ENCODE measurements at regions of chr14 and their contacts with region 1.

Region 1: DNA sequence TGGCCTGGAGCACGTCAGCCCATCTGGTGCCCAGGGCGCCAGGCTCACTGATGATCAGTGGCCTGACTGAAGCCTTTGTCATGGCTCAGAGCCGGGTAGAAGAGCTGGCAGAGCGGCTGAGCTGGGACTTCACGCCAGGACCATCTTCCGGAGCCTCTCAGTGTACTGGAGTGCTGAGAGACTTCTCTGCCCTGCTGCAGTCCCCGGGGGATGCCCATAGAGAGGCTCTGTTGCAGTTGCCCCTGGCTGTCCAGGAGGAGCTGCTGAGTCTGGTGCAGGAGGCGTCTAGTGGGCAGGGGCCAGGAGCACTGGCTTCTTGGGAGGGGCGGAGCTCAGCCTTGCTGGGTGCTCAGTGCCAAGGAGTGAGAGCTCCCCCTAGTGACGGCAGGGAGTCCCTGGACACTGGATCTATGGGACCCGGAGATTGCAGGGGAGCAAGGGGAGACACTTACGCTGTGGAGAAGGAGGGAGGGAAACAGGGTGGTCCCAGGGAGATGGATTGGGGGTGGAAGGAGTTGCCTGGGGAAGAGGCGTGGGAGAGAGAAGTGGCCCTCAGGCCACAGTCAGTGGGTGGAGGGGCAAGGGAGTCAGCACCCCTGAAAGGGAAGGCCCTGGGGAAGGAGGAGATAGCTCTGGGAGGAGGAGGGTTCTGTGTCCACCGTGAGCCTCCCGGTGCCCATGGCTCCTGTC is 2.0 kb downstream of the KHNYN start:
- DNase-seq: peak; percentile 95
- ATAC-seq: peak; percentile 65
- H3K4me3 Mint-ChIP-seq: peak overlapping the region; percentile 90
- H3K27ac Mint-ChIP-seq: peak overlapping the region; percentile 97
- H3K4me1 Mint-ChIP-seq: peaks cover 31% of the 10 kb centered on the region
- H3K27me3 Mint-ChIP-seq: no peaks in the 10 kb centered on the region
- CTCF ChIP-seq: peak; percentile 87

Region 2: DNA sequence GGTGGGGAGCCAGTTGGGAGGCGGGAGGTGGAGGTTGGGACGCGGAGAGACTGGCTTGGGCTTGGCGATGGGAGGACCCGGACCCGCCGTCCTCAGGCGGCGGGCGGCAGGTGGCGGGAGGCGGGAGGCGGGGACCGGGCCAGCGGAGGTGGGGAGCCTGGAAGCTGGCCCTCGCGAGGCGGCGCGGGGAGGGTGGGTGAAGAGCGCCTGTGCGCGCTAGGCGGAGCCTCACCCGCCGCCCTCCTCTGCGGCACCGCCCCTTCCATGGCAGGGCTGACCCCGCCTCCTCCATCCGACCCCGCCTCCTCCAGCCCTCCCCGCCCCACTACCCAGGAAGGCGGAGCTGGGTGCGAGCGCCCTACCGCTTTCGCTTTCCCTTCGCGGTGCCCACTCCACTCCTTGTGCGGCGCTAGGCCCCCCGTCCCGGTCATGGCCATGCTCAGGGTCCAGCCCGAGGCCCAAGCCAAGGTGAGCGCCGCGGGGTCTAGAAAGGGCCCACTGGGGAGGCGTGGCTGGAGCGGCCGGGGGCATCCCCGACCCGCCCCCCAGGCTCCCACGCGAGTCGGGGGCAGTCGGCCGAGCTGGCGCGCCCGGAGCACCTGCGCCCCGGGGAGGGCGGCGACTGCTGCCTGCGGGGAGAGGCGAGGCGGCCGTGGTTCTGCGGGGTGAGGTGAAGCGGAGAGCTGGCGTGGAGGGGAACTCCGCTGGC is 295.7 kb before region 1 on chr14 and contains the start of gene PSME1:
- CTCF ChIA-PET with region 1: no interaction called
- POLR2A ChIA-PET with region 1: no interaction called
- intact Hi-C with region 1: no loop called
- DNase-seq: peak; percentile 96
- ATAC-seq: peak; percentile 97
- H3K4me3 Mint-ChIP-seq: peak within 1 kb of the TSS; percentile 97
- H3K27ac Mint-ChIP-seq: peak within 1 kb of the TSS; percentile 92
- H3K4me1 Mint-ChIP-seq: peaks cover 56% of the 10 kb centered on the region
- H3K27me3 Mint-ChIP-seq: no peaks in the 10 kb centered on the region
- CTCF ChIP-seq: no peak
- total RNA-seq, gene PSME1: 451 to 460 TPM

Region 3: GRCh38 chr14:24310646-24311604 is 120.8 kb before region 1 on chr14 and contains the start of gene LTB4R:
- CTCF ChIA-PET with region 1: interaction called, 43 read pairs
- POLR2A ChIA-PET with region 1: interaction called, 11 read pairs
- intact Hi-C with region 1: no loop called
- DNase-seq: peak; percentile 74
- ATAC-seq: peak; percentile 87
- H3K4me3 Mint-ChIP-seq: peak within 1 kb of the TSS; percentile 58
- H3K27ac Mint-ChIP-seq: peak within 1 kb of the TSS; percentile 81
- H3K4me1 Mint-ChIP-seq: peaks cover 66% of the 10 kb centered on the region
- H3K27me3 Mint-ChIP-seq: no peaks in the 10 kb centered on the region
- CTCF ChIP-seq: peak; percentile 63
- total RNA-seq, gene LTB4R: 11.6 to 11.7 TPM

Region 4: DNA sequence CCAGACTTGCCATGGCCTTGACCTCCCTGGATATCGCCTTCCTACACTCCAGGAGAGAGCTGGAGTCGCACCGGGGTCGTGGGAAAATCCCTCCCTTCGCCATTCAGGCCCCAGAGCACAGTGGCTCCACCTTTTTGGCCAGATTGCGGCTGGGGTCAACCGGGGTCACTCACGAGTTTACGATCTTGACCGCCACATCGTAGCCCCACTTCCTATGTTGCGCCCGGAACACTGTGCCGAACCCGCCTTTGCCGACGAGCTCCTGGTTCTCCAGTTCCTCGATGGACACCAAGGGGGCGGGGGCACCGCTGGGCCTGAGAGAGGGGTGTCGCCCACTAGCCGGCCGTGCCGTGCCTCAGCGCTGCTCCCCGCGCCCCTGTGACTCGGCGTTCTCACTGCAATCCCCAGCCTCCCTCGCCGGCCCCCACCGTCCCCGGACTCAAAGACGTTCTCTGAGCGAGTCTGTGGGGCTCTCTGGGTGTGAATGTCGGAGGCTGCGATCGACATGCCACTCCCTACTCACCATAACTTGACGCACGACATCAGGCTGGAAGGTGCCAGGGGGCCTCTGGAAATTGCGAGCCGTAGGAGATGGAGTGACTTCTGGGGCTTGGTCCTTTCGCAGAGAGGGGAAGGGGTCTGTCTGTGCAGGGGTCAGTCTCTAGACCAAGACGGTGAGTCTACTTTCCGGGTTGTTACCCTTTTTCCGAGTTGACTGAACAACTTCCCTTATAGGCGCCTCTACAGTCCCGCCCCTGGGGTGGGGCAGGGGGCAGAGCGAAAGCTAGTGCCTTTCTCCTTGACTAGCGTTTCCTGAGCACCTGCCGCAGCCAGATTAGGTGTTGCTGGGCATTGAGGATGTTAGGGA is 92.2 kb before region 1 on chr14 and contains the start of gene RIPK3:
- CTCF ChIA-PET with region 1: interaction called, 454 read pairs
- POLR2A ChIA-PET with region 1: interaction called, 82 read pairs
- intact Hi-C with region 1: no loop called
- DNase-seq: peak; percentile 81
- ATAC-seq: peak; percentile 94
- H3K4me3 Mint-ChIP-seq: peak within 1 kb of the TSS; percentile 85
- H3K27ac Mint-ChIP-seq: peak within 1 kb of the TSS; percentile 74
- H3K4me1 Mint-ChIP-seq: peaks cover 18% of the 10 kb centered on the region
- H3K27me3 Mint-ChIP-seq: peaks cover 12% of the 10 kb centered on the region
- CTCF ChIP-seq: no peak
- total RNA-seq, gene RIPK3: 5.9 to 6.5 TPM

Region 5: GRCh38 chr14:24372701-24373416 is 58.9 kb before region 1 on chr14:
- CTCF ChIA-PET with region 1: interaction called, 23 read pairs
- POLR2A ChIA-PET with region 1: interaction called, 7 read pairs
- intact Hi-C with region 1: loop called (anchors 5 kb)
- DNase-seq: no peak
- ATAC-seq: no peak
- H3K4me3 Mint-ChIP-seq: no peak overlapping the region
- H3K27ac Mint-ChIP-seq: no peak overlapping the region
- H3K4me1 Mint-ChIP-seq: peaks cover 6% of the 10 kb centered on the region
- H3K27me3 Mint-ChIP-seq: peaks cover 6% of the 10 kb centered on the region
- CTCF ChIP-seq: no peak

Region 6: DNA sequence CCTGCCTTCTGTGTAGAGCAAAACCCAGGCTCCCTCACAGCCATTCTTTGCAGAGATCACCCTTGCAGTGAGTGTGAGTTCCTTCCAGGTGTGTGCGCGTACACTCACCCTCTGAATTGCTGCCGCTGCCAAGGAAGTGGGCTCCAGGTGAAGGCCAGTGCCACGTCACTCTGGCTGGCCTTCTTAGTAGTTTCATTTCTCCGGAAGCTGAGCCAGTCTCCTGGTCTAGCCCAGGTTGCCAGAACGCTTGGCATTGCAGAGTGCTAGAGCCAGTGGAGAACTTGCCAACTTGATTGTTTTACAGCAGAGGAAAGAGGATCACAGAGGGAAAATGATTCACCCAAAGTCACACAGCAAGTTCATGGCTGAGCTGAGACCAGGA is 13.2 kb before region 1 on chr14:
- CTCF ChIA-PET with region 1: interaction called, 43 read pairs
- POLR2A ChIA-PET with region 1: interaction called, 13 read pairs
- intact Hi-C with region 1: no loop called
- DNase-seq: no peak
- ATAC-seq: no peak
- H3K4me3 Mint-ChIP-seq: no peak overlapping the region
- H3K27ac Mint-ChIP-seq: no peak overlapping the region
- H3K4me1 Mint-ChIP-seq: no peaks in the 10 kb centered on the region
- H3K27me3 Mint-ChIP-seq: peaks cover 2% of the 10 kb centered on the region
- CTCF ChIP-seq: no peak

Region 7: GRCh38 chr14:24473211-24473610 is 41.5 kb after region 1 on chr14:
- CTCF ChIA-PET with region 1: no interaction called
- POLR2A ChIA-PET with region 1: no interaction called
- intact Hi-C with region 1: no loop called
- DNase-seq: no peak
- ATAC-seq: no peak
- H3K4me3 Mint-ChIP-seq: no peak overlapping the region
- H3K27ac Mint-ChIP-seq: no peak overlapping the region
- H3K4me1 Mint-ChIP-seq: no peaks in the 10 kb centered on the region
- H3K27me3 Mint-ChIP-seq: no peaks in the 10 kb centered on the region
- CTCF ChIP-seq: no peak